ENCODE measurements at regions of chr12 and their contacts with region 1.

Region 1: DNA sequence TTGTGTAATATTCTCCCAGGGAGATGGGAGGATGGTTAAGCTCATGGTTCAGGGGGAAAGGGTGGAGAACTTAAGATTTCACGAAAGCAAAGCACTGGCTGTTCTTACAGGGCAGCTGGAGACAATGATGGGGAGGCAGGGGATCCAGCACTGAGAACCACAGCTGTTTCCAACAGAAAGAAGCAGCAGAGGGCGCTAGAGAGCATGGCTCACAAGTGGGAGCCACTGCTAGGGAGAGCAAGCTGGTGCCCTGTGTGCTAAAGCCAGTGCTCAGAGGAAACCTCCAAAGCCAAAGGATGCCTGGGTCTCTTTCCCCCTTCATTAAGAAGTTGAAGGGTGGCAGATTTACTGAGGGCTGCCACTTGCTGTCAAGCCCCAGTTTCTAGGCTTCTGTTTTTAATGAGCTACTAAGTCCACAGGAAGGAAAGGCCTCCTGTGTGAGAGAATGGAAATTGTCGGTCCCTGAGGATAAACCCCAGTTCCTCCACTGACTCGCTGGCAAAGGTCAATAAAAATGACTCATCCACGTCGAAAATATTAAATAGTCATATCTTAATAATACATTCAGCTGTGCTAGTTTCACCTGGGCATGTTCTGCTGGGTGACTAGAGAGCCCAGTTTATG is 199.7 kb downstream of the ANO2 start:
- DNase-seq: peak; percentile 66 to 74 (median 71)
- ATAC-seq: peak; percentile 81 to 93 (median 86)
- H3K4me3 ChIP-seq: no peak overlapping the region
- H3K27ac ChIP-seq: peak overlapping the region in 5 of 12 donors; percentile 14 to 47 (median 24)
- H3K4me1 ChIP-seq: peaks cover 0 to 17% (median 7%) of the 10 kb centered on the region in 12 donors
- H3K27me3 ChIP-seq: no peaks in the 10 kb centered on the region
- CTCF ChIP-seq: peak; percentile 71 to 91 (median 80)
- POLR2A ChIP-seq: no peak

Region 2: DNA sequence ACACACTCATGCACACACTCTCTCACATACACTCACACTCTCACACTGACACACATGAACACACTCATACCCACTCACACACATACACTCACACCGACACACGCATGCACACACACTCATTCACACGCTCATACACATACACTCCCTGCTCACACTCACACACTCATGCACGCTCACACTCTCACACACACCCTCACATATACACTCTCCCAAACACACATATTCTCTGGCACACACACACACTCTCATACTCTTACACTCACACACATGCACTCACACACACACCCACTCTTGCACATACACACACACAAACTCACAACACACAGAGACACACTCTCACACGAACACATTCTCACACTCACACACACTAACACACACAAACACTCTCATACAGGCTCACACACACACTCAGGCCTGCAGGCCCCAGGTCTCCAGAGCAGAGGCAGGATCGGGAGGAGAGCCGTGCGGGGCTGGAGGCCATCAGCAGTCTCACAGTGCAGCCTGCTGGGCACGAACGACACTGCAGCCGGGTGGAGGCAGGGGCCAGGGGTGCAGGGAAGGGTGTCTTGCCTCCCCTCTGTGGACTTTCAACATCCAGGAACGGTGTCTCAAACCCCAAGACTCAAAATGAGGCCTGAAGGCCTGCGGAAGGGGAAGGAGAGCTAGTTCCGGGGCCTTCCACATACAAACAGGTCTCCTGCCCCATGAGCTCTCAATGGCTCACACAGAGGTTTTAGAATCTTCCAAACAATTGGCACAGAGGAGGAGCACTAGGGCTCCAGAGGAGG is 51.0 kb after region 1 on chr12:
- intact Hi-C with region 1: loop called in 3 of 10 experiments (anchors 5 kb)
- DNase-seq: peak; percentile 23 to 71 (median 34)
- ATAC-seq: peak in 3 of 4 donors; percentile 68 to 81 (median 75)
- H3K4me3 ChIP-seq: no peak overlapping the region
- H3K27ac ChIP-seq: no peak overlapping the region
- H3K4me1 ChIP-seq: peaks cover 0 to 9% (median 0%) of the 10 kb centered on the region in 12 donors
- H3K27me3 ChIP-seq: no peaks in the 10 kb centered on the region
- CTCF ChIP-seq: peak; percentile 32 to 70 (median 56)
- POLR2A ChIP-seq: no peak

Region 3: DNA sequence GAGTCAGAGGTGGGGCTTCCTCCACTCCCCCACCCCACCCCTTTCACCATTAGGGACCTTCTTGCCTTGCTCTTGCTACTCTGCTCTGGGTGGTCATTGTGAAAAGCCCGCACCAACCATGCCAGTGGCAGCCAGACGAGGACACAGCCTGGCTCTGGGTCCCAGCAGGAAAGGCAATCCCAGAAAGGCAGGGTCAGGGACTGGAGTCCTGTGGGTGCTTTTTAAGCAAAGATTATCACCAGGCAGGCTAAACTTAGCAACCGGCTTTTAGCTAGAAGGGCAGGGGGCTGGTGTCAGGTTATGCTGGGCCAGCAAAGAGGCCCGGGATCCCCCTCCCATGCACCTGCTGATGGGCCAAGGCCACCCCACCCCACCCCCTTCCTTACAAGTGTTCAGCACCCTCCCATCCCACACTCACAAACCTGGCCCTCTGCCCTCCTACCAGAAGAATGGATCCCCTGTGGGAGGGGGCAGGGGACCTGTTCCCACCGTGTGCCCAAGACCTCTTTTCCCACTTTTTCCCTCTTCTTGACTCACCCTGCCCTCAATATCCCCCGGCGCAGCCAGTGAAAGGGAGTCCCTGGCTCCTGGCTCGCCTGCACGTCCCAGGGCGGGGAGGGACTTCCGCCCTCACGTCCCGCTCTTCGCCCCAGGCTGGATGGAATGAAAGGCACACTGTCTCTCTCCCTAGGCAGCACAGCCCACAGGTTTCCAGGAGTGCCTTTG is 787.7 kb after region 1 on chr12:
- intact Hi-C with region 1: no loop called
- DNase-seq: peak; percentile 73 to 86 (median 83)
- ATAC-seq: peak; percentile 47 to 71 (median 55)
- H3K4me3 ChIP-seq: peak overlapping the region; percentile 64 to 100 (median 90)
- H3K27ac ChIP-seq: peak overlapping the region; percentile 90 to 100 (median 96)
- H3K4me1 ChIP-seq: peaks cover 0 to 53% (median 43%) of the 10 kb centered on the region in 12 donors
- H3K27me3 ChIP-seq: no peaks in the 10 kb centered on the region
- CTCF ChIP-seq: no peak
- POLR2A ChIP-seq: no peak

Measured in heart left ventricle (tissue), 16 donors.